Activated CD8-positive, alpha-beta T cell treated with anti-CD3 and anti-CD28 coated beads for 36 hours (primary cell): ENCODE measurements at regions of chr14 and their contacts with region 1.

Region 1: DNA sequence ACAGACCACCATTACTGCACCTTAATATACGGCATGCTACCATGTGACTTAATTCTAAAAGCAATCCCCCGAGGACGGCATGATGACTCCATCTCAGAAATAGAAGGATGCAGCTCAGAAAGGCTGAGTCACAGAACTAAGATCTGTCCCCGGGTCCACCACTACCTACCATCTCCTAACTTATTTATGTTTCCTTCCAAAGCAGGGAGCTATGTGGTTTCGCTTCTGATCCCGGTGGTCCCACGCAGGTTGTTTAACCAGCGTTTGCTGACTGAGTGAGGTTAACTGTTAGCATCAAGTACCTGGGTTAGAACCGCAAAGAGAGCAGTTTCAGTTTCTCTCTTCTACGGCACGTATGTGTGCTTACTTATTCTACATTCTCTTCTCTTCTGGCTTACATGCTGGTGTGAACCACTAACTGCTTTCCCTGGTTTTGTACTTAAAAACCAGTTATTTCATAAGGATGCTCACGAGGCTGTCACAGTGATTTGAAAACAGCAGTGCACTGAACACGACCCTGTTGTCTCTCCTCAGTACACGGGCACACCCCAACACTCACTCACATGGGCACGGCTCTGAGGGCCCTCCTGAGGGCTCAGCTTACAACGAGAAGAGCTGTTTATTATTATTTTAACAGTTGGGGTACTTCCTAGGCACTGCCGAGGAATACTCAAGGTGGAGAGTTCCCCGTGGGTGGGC is 66.7 kb downstream of the CCDC88C start:
- DNase-seq: peak; percentile 90
- ATAC-seq: peak; percentile 59
- H3K4me3 Mint-ChIP-seq: peak overlapping the region; percentile 65
- H3K27ac Mint-ChIP-seq: peak overlapping the region; percentile 85
- H3K4me1 Mint-ChIP-seq: peaks cover 95% of the 10 kb centered on the region
- H3K27me3 Mint-ChIP-seq: no peaks in the 10 kb centered on the region
- CTCF ChIP-seq: no peak

Region 2: DNA sequence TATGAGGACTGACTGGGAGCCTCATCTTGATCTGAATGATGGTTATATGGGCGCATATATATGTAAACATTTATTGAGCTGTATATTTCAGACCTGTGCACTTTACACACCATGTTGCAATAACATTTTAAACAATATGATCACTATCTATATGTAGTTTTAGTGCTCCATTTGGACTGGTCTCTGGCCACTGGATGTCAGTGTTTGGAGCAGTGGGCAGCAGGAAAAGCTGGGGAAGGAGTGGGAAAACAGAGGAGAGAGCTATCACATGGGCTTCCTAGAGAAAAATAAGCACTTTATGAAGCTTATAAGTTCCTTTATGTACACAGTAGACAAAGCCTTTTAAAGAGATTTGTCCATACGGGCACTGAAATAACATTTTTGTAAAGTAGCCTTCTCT is 485.5 kb before region 1 on chr14:
- CTCF ChIA-PET with region 1: no interaction called
- POLR2A ChIA-PET with region 1: no interaction called
- intact Hi-C with region 1: no loop called
- DNase-seq: no peak
- ATAC-seq: no peak
- H3K4me3 Mint-ChIP-seq: no peak overlapping the region
- H3K27ac Mint-ChIP-seq: no peak overlapping the region
- H3K4me1 Mint-ChIP-seq: no peaks in the 10 kb centered on the region
- H3K27me3 Mint-ChIP-seq: no peaks in the 10 kb centered on the region
- CTCF ChIP-seq: no peak

Region 3: DNA sequence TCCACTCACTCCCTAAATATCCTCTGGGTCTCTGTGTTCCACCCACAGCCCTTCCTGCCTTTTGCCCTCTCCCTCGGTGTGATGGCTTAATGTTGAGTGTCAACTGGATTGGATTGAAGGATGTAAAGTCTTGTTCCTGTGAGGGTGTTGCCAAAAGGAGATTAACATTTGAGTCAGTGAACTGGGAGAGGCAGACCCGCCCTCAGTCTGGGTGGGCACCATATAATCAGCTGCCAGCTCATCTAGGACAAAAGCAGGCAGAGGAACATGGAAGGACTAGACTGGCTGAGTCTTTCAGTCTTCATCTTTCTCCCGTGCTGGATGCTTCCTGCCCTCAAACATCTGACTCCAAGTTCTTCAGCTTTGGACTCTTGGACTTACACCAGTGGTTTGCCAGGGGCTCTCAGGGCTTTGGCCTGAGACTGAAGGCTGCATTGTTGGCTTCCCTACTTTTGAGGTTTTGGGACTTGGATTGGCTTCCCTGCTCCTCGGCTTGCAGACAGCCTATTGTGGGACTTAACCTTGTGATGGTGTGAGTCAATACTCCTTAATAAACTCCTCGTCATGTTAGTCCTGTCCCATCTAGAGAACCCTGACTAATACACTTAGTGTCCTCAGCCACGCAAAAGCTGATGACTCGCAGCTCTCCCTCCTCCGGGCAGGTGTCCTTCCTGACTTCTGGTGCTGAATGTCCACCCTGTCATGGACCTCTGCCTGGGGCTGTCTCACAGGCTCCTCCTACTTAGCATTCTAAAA is 231.2 kb before region 1 on chr14:
- CTCF ChIA-PET with region 1: no interaction called
- POLR2A ChIA-PET with region 1: no interaction called
- intact Hi-C with region 1: no loop called
- DNase-seq: no peak
- ATAC-seq: no peak
- H3K4me3 Mint-ChIP-seq: no peak overlapping the region
- H3K27ac Mint-ChIP-seq: peak overlapping the region; percentile 13
- H3K4me1 Mint-ChIP-seq: peaks cover 62% of the 10 kb centered on the region
- H3K27me3 Mint-ChIP-seq: no peaks in the 10 kb centered on the region
- CTCF ChIP-seq: no peak

Region 4: DNA sequence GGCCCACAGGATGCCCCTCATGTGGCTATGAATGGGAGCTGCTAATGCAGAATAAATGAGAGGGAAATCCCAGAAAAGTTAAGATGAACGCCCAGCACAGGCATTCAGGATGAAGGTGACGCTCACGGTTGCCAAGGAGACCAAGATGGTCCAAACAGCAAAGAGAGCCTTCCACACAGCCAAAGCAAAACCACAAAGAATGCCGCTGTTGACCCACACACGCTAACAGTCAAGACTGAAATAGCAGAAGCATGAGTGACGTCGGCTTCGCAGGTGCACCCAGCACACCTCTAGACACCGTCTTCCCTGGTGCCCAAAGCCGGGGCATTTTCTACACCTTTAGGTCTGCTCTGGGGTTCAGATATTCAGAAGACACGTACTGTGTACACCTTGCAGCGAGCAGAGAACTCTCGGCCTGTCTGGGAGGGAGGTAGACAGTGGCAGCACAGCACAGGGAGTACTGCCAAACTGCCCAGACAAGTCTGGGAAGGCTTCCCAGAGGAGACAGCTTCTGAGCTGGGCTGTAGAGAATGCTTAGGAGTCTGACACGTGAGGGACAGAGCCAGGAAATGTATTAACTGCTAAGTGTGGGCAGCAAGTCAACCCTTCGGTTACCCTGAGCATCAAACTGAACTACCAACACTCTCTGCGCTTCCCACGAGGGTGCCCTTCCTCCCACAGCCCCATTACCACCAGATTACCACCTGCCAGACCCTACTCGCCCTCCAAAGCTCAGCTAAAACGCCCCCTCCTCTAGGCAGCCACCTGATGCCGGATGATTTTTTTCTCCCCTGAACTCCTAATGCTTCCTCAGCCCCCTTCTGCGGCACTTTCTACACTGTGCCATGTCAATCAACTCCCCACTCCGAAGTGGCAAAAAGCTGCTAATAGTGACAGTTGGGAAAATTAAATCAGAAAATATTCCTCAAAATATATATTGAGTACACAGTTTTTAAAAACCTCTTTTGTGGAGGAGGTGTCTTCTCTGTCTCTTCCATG is 16.5 kb after region 1 on chr14:
- CTCF ChIA-PET with region 1: interaction called, 22 read pairs
- POLR2A ChIA-PET with region 1: interaction called, 167 read pairs
- intact Hi-C with region 1: no loop called
- DNase-seq: peak; percentile 82
- ATAC-seq: peak; percentile 51
- H3K4me3 Mint-ChIP-seq: peak overlapping the region; percentile 66
- H3K27ac Mint-ChIP-seq: peak overlapping the region; percentile 83
- H3K4me1 Mint-ChIP-seq: peaks cover 94% of the 10 kb centered on the region
- H3K27me3 Mint-ChIP-seq: no peaks in the 10 kb centered on the region
- CTCF ChIP-seq: no peak

Region 5: GRCh38 chr14:91373591-91374254 is 22.8 kb after region 1 on chr14:
- CTCF ChIA-PET with region 1: interaction called, 15 read pairs
- POLR2A ChIA-PET with region 1: interaction called, 167 read pairs
- intact Hi-C with region 1: loop called (anchors 2 kb)
- DNase-seq: peak; percentile 84
- ATAC-seq: peak; percentile 53
- H3K4me3 Mint-ChIP-seq: peak overlapping the region; percentile 49
- H3K27ac Mint-ChIP-seq: peak overlapping the region; percentile 90
- H3K4me1 Mint-ChIP-seq: peaks cover 98% of the 10 kb centered on the region
- H3K27me3 Mint-ChIP-seq: no peaks in the 10 kb centered on the region
- CTCF ChIP-seq: no peak

Region 6: GRCh38 chr14:91388551-91388975 is 37.6 kb after region 1 on chr14:
- CTCF ChIA-PET with region 1: interaction called, 10 read pairs
- POLR2A ChIA-PET with region 1: interaction called, 11 read pairs
- intact Hi-C with region 1: no loop called
- DNase-seq: peak; percentile 75
- ATAC-seq: peak; percentile 73
- H3K4me3 Mint-ChIP-seq: peak overlapping the region; percentile 42
- H3K27ac Mint-ChIP-seq: peak overlapping the region; percentile 87
- H3K4me1 Mint-ChIP-seq: peaks cover 88% of the 10 kb centered on the region
- H3K27me3 Mint-ChIP-seq: no peaks in the 10 kb centered on the region
- CTCF ChIP-seq: no peak

Region 7: GRCh38 chr14:91396959-91397815 is 46.2 kb after region 1 on chr14:
- CTCF ChIA-PET with region 1: interaction called, 112 read pairs
- POLR2A ChIA-PET with region 1: interaction called, 32 read pairs
- intact Hi-C with region 1: no loop called
- DNase-seq: peak; percentile 80
- ATAC-seq: peak; percentile 73
- H3K4me3 Mint-ChIP-seq: peak overlapping the region; percentile 70
- H3K27ac Mint-ChIP-seq: peak overlapping the region; percentile 95
- H3K4me1 Mint-ChIP-seq: peaks cover 89% of the 10 kb centered on the region
- H3K27me3 Mint-ChIP-seq: no peaks in the 10 kb centered on the region
- CTCF ChIP-seq: no peak

Region 8: GRCh38 chr14:91523972-91524371 is 173.0 kb after region 1 on chr14:
- CTCF ChIA-PET with region 1: no interaction called
- POLR2A ChIA-PET with region 1: no interaction called
- intact Hi-C with region 1: no loop called
- DNase-seq: no peak
- ATAC-seq: peak; percentile 49
- H3K4me3 Mint-ChIP-seq: no peak overlapping the region
- H3K27ac Mint-ChIP-seq: no peak overlapping the region
- H3K4me1 Mint-ChIP-seq: no peaks in the 10 kb centered on the region
- H3K27me3 Mint-ChIP-seq: no peaks in the 10 kb centered on the region
- CTCF ChIP-seq: no peak